ENCODE measurements at regions of chr20 and their contacts with region 1.

Region 1: DNA sequence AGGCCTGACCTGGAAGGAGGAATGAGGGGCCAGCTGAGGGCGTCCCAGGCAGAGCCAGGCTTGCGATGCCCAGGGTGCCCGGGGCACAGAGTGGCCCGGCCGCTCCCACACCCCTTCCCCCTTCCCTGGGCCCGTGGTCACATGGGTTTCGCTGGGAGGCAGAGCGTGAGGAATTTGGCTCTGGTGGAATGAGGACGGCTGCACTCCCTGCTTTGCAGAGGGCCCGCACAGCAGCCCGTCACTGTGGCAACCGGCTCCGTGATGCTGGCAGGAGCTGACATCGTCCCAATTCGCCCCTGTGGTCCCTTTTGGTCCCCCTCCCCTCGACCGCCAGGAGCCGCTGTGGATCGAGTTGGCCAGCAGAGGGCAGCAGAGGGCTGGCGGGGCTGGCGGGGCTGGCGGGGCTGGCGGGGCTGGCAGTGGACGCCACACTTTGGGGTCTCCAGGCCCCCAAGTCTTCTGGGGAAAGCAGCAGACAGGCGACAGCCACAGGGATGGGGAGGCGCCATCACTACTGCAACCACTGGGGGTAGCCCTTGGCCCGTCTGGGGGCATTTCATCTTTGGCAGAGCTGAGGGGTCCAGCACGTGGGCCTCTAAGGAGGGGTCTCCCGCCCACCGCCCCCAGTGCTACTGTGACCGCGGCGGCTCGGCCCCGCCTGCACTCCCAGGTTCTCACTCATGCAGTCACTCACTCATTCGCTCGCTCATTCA is 49.6 kb upstream of the BHLHE23 start:
- DNase-seq: peak; percentile 70 to 91
- H3K4me3 ChIP-seq: no peak overlapping the region
- H3K4me3 Mint-ChIP-seq: no peak overlapping the region
- H3K27ac Mint-ChIP-seq: no peak overlapping the region
- H3K4me1 ChIP-seq: peaks cover 11% of the 10 kb centered on the region
- H3K4me1 Mint-ChIP-seq: no peaks in the 10 kb centered on the region
- H3K27me3 ChIP-seq: no peaks in the 10 kb centered on the region
- H3K27me3 Mint-ChIP-seq: peaks cover 3% of the 10 kb centered on the region
- CTCF ChIP-seq: peak; percentile 98 to 100

Region 2: DNA sequence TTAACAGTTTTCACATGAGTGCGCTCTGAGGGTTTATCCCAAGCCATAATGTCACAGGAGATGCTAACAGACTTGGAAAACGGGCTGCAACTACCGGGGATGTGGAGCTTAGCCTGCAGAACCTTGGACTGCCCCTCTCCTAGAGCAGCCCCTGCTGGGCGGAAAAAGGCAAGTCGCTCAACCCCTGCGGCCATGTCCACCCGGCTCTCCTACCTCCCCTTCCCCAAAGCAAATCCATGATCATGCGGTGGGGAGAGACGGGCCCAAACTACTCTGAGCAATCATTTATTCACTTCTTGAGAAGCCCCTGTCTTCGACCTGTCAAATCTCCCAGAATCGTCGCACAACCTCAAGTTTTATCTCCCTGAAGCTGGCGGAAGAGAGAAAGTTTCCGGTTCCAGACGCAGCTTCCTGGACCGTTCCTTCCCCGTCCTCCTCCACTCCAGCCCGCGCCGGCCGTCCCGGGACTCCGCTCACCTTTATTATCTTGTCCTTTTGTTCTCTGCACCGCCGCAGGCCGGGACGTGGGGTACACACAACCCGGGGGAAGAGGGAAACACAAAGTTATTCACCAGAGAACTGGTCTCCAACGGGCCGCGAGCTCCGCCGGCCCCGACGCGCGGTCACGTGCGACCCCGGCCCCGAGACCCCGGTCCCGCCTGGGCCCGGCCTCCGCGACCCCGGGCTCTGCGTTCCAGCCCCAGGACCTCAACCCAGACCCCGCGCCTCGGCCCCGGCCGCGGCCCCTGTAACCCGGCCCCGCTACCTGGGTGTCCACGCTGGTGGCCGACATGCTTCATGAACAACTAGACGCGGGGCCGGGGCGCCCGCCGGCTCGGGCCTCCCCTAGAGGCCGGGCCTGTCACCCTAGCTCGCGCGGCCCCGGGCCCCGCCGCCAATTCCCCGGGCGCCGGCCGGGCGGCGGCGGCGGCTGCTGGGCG is 159.0 kb after region 1 on chr20:
- CTCF ChIA-PET with region 1: interaction called, 4 read pairs
- POLR2A ChIA-PET with region 1: no interaction called
- intact Hi-C with region 1: loop called (anchors 1 kb)
- DNase-seq: peak; percentile 89 to 90
- H3K4me3 ChIP-seq: peak overlapping the region; percentile 94
- H3K4me3 Mint-ChIP-seq: peak overlapping the region; percentile 92
- H3K27ac Mint-ChIP-seq: peak overlapping the region; percentile 84
- H3K4me1 ChIP-seq: peaks cover 40% of the 10 kb centered on the region
- H3K4me1 Mint-ChIP-seq: peaks cover 47% of the 10 kb centered on the region
- H3K27me3 ChIP-seq: no peaks in the 10 kb centered on the region
- H3K27me3 Mint-ChIP-seq: peaks cover 3% of the 10 kb centered on the region
- CTCF ChIP-seq: peak; percentile 80 to 97

Measured in Caco-2 (cell line).